ENCODE measurements at regions of chr11 and their contacts with region 1.

Region 1: DNA sequence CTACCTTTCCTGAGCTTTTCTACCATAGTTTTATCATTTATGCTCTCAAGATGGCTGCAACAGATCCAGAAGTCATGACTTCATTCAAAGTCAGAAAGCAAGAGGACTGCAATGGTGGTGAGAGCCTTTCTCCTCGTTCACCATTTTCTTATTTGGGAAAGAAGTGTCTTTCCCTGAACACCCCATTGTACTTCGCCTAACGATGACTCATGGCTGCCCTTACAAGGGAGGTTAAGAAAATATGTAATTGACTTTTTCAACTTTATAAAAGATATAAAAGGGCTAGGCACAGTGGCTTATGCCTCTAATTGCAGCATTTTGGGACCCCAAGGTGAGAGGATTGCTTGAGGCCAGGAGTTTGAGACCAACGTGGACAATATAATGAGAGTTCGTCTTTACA is 541.7 kb downstream of the METTL15 start:
- DNase-seq: no peak
- H3K4me3 ChIP-seq: no peak overlapping the region
- H3K27ac ChIP-seq: no peak overlapping the region
- H3K4me1 ChIP-seq: no peaks in the 10 kb centered on the region
- H3K27me3 ChIP-seq: no peaks in the 10 kb centered on the region
- CTCF ChIP-seq: no peak
- EP300 ChIP-seq: no peak
- POLR2A ChIP-seq: no peak

Region 2: DNA sequence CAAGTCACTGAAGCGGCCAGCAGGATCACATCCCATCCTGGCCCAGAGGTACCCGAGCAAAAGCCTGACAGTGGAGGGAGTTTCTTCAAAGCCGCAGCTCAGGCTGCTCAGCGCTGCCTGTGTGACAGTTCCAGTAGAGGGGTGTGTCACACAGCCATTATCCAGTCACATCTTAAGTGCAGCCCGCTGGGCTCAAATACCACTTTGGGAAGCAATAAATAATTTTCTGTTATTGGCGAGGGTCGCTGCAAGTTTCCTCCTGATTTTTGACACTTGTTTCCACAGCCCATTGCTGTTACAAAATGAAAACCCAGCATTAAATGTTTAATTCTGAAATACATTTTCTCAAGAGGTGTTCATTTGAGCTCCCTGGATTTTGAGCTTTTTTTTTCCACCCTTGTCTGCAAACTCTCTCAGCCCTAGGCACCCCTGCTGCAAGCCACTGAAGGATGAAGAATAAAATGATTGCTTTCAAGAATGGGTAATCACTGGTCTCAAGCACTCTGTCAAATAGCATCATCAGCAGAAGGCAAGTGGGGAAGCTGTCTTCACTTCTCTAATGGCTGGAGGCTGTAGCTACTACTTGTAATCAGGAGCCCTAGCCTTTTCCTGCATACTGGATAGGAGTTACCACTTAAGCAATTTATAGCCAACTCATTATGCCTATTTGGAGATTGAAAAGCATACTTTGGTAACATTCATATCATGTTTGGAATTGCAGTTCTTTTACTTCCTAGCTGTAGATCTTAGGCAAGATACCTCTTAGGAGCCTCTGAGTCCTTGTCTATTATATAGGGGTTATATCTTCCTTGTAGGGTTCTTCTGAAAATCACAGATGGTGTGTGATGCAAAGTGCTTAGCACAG is 168.1 kb before region 1 on chr11:
- in situ Hi-C with region 1: no loop called
- intact Hi-C with region 1: no loop called
- DNase-seq: no peak
- H3K4me3 ChIP-seq: no peak overlapping the region
- H3K27ac ChIP-seq: no peak overlapping the region
- H3K4me1 ChIP-seq: no peaks in the 10 kb centered on the region
- H3K27me3 ChIP-seq: no peaks in the 10 kb centered on the region
- CTCF ChIP-seq: no peak
- EP300 ChIP-seq: no peak
- POLR2A ChIP-seq: no peak

Region 3: GRCh38 chr11:28674433-28675103 is 24.6 kb after region 1 on chr11:
- in situ Hi-C with region 1: no loop called
- intact Hi-C with region 1: loop called (anchors 1 kb)
- DNase-seq: no peak
- H3K4me3 ChIP-seq: no peak overlapping the region
- H3K27ac ChIP-seq: no peak overlapping the region
- H3K4me1 ChIP-seq: no peaks in the 10 kb centered on the region
- H3K27me3 ChIP-seq: no peaks in the 10 kb centered on the region
- CTCF ChIP-seq: peak in 1 of 5 experiments; percentile 3
- EP300 ChIP-seq: no peak
- POLR2A ChIP-seq: no peak